Gastrocnemius medialis (tissue), 4 donors: ENCODE measurements at regions of chr6 and their contacts with region 1.

Region 1: DNA sequence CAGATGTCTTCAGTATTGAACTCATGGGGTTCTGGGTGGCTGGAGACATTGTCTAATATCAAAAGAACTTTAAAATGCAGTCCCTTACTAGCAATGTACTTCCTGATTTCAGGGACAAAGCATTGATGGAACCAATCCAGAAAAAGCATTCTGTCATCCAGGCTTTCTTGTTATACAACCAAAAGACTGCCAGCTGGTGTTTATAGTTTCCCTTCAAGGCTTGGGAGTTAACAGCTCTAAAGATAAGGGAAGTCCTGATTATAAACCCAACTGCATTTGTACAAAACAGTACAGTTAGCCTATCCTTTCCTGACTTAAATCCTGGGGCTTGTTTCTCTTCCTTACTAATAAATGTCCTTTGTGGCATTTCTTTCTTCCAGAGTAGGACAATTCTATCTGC is 160.0 kb downstream of the COL21A1 start:
- DNase-seq: no peak
- ATAC-seq: no peak
- H3K4me3 ChIP-seq: no peak overlapping the region
- H3K27ac ChIP-seq: no peak overlapping the region
- H3K4me1 ChIP-seq: peaks cover 0 to 8% of the 10 kb centered on the region in 2 donors
- H3K27me3 ChIP-seq: no peaks in the 10 kb centered on the region
- CTCF ChIP-seq: no peak
- POLR2A ChIP-seq: no peak

Region 2: GRCh38 chr6:56235245-56235644 is 147.8 kb after region 1 on chr6:
- in situ Hi-C with region 1: no loop called
- intact Hi-C with region 1: loop called (anchors 10 kb)
- DNase-seq: no peak
- ATAC-seq: peak; percentile 39 to 51
- H3K4me3 ChIP-seq: no peak overlapping the region
- H3K27ac ChIP-seq: peak overlapping the region in 3 of 4 donors; percentile 35 to 53 (median 47)
- H3K4me1 ChIP-seq: peaks cover 0 to 1% of the 10 kb centered on the region in 2 donors
- H3K27me3 ChIP-seq: no peaks in the 10 kb centered on the region
- CTCF ChIP-seq: no peak
- POLR2A ChIP-seq: no peak

Region 3: GRCh38 chr6:56570413-56571359 is 483.3 kb after region 1 on chr6:
- in situ Hi-C with region 1: no loop called
- intact Hi-C with region 1: no loop called
- DNase-seq: no peak
- ATAC-seq: peak in 1 of 2 donors; percentile 56
- H3K4me3 ChIP-seq: no peak overlapping the region
- H3K27ac ChIP-seq: no peak overlapping the region
- H3K4me1 ChIP-seq: no peaks in the 10 kb centered on the region
- H3K27me3 ChIP-seq: no peaks in the 10 kb centered on the region
- CTCF ChIP-seq: peak in 4 of 5 experiments; percentile 23 to 58 (median 45)
- POLR2A ChIP-seq: no peak